AG04449 (cell line): ENCODE measurements at regions of chr12 and their contacts with region 1.

Region 1: GRCh38 chr12:92408072-92408900 is 262.6 kb upstream of the BTG1 start:
- DNase-seq: no peak
- H3K4me3 ChIP-seq: no peak overlapping the region
- CTCF ChIP-seq: peak; percentile 71

Region 2: DNA sequence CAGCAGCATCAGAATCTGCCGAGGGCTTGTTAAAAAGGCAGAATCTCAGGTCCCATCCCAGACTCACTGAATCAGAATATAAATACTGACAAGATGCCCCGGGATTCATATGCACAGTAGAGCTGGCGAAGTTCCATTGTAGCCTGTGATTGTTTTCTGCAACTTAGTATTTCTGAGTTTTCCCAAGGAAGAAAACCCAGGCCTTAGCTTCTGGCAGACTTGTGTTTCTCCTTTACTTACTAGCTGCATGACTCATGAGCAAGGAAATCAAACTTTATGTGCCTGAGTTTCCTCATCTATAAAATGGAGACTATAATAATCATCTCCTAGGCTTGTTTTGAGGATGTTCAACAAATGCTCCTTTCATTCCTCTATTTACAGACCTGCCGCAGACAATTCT is 16.1 kb after region 1 on chr12:
- CTCF ChIA-PET with region 1: interaction called, 10 read pairs
- POLR2A ChIA-PET with region 1: no interaction called
- DNase-seq: no peak
- H3K4me3 ChIP-seq: no peak overlapping the region
- CTCF ChIP-seq: no peak

Region 3: GRCh38 chr12:92439407-92439779 is 31.1 kb after region 1 on chr12:
- CTCF ChIA-PET with region 1: no interaction called
- POLR2A ChIA-PET with region 1: no interaction called
- DNase-seq: no peak
- H3K4me3 ChIP-seq: no peak overlapping the region
- CTCF ChIP-seq: no peak

Region 4: GRCh38 chr12:92912052-92912451 is 503.8 kb after region 1 on chr12:
- CTCF ChIA-PET with region 1: no interaction called
- POLR2A ChIA-PET with region 1: no interaction called
- DNase-seq: no peak
- H3K4me3 ChIP-seq: no peak overlapping the region
- CTCF ChIP-seq: no peak